ENCODE measurements at regions of chr13 and their contacts with region 1.

Region 1: DNA sequence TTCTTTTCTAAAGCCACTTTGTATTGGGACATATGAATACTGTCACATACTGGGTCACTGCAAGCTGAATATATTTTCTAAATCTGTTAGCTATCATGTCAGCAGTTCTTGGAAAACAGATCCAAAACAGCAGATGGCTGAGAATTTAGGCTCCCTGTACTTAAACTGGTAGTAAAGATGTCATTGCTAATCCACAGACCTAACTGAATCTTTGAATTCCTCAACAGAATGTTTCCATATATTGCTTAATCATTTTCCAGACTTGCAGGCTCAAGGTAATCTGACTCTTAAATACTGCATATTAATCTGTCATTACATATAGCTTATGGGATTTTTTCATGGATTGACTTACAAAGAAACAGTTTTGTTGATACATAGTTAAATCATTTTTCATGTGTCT is 639.0 kb upstream of the KLHL1 start:
- DNase-seq: no peak
- H3K4me3 ChIP-seq: no peak overlapping the region
- H3K27ac ChIP-seq: no peak overlapping the region
- H3K4me1 ChIP-seq: no peaks in the 10 kb centered on the region
- H3K27me3 ChIP-seq: no peaks in the 10 kb centered on the region
- CTCF ChIP-seq: no peak
- POLR2A ChIP-seq: no peak

Region 2: GRCh38 chr13:71797517-71797916 is 1050.3 kb after region 1 on chr13:
- intact Hi-C with region 1: loop called (anchors 5 kb)
- DNase-seq: no peak
- H3K4me3 ChIP-seq: no peak overlapping the region
- H3K27ac ChIP-seq: no peak overlapping the region
- H3K4me1 ChIP-seq: no peaks in the 10 kb centered on the region
- H3K27me3 ChIP-seq: no peaks in the 10 kb centered on the region
- CTCF ChIP-seq: no peak
- POLR2A ChIP-seq: no peak